Spleen (tissue), 13 donors: ENCODE measurements at regions of chr19 and their contacts with region 1.

Region 1: DNA sequence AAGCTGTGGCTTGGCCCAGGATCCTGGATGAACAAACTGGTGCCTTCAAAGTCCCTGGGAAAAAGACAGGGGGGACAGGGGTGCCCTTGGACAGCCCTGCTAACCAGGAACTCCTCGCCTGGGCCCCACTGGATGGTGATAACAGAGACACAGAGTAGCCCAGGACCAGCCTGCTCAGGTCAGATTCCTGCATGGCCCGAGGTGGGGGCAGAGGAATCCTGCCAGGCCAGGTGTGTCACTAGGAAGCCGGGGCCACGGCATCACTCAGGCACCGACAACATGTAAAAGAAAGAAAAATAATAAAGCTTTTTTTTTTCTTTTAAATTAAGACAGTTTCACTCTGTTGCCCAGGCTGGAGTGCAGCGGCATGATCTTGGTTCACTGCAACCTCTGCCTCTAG is 5.6 kb upstream of the RPL18A start:
- DNase-seq: no peak
- H3K4me3 ChIP-seq: no peak overlapping the region
- H3K27ac ChIP-seq: no peak overlapping the region
- H3K4me1 ChIP-seq: peaks cover 25 to 49% (median 39%) of the 10 kb centered on the region in 6 donors
- H3K27me3 ChIP-seq: no peaks in the 10 kb centered on the region
- CTCF ChIP-seq: no peak
- POLR2A ChIP-seq: no peak

Region 2: DNA sequence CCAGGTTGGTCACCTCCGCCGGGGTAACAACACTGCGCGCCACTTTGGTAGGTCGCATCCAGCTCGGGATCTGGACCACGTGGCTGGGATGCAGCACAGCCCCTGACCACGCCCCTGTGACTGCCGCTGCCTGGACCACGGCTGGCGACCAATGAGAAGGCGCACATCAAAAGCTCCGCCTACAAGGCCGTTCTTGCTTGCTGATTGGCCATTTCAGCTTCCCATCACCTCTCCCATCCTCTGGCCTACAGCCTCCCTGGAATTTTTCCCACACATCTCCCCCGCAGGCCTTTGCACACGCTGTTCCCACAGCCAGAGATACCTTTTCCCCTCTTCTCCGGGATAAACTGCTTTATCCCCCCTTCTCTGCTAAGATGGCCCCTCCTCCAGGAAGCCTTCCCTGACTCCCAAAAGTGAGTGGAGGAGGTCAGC is 147.3 kb before region 1 on chr19:
- intact Hi-C with region 1: loop called (anchors 5 kb)
- DNase-seq: no peak
- H3K4me3 ChIP-seq: no peak overlapping the region
- H3K27ac ChIP-seq: no peak overlapping the region
- H3K4me1 ChIP-seq: peaks cover 0 to 7% (median 2%) of the 10 kb centered on the region in 6 donors
- H3K27me3 ChIP-seq: peaks cover 0 to 13% (median 0%) of the 10 kb centered on the region in 7 donors
- CTCF ChIP-seq: no peak
- POLR2A ChIP-seq: no peak